Tibial artery (tissue), 4 donors: ENCODE measurements at regions of chr15 and their contacts with region 1.

Region 1: DNA sequence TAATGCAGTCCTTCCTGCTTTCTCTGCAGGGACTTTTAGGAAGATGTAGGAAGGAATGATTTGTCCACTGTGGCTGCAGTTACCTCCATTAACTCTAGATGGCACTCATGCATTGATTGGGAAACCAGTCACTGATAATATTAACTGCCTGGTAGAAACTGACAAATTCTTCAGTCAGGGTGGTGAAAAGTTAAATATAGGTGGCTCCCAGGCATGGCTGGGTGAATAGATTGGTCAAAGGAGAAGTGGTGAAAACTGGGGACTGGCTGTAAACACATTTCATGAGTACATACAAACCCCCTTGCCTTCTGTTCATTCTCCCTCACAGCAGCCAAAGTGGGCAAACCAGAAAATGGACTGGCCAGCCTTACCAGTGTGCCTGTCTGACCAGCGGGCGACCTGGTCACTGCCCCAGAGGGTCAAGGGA is 333.4 kb downstream of the THSD4 start:
- DNase-seq: peak in 1 of 2 donors; percentile 38
- H3K4me3 ChIP-seq: no peak overlapping the region
- H3K27ac ChIP-seq: no peak overlapping the region
- H3K4me1 ChIP-seq: peaks cover 0 to 15% (median 2%) of the 10 kb centered on the region in 4 donors
- H3K27me3 ChIP-seq: no peaks in the 10 kb centered on the region
- CTCF ChIP-seq: peak; percentile 93 to 97

Region 2: DNA sequence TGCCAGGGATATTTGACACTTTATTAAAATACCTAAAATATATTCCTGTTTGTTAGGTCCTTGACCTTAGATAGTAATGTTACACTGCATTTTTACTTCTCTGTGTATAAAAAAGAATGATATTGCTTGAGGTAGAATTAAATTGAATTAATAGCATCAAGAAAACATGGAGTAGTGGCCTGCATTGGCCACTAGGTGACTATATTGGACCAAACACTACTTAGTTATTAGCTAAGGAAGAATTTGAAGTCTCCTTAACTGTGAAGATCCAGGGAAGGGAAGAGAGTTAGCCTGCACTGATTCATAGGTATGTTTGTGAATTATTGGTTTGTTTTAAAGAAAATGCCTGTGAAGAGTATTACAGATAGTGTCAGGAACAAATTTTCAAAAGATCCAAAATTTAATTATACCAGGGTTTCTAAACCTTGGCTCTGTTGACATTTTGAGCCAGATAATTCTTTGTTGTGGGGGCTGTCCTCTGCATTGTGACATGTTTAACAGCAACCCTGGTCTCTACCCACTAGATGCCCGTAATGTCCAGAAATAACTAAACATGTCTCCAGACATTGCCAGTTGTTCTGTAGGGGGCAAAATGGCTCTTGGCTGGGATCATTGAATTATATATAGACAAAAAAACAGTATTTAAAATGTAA is 437.1 kb before region 1 on chr15:
- intact Hi-C with region 1: loop called (anchors 10 kb)
- DNase-seq: no peak
- H3K4me3 ChIP-seq: no peak overlapping the region
- H3K27ac ChIP-seq: no peak overlapping the region
- H3K4me1 ChIP-seq: no peaks in the 10 kb centered on the region
- H3K27me3 ChIP-seq: no peaks in the 10 kb centered on the region
- CTCF ChIP-seq: peak; percentile 80 to 81

Region 3: GRCh38 chr15:71651750-71652186 is 203.1 kb after region 1 on chr15:
- intact Hi-C with region 1: loop called (anchors 5 kb)
- DNase-seq: peak in 1 of 2 donors; percentile 25
- H3K4me3 ChIP-seq: no peak overlapping the region
- H3K27ac ChIP-seq: no peak overlapping the region
- H3K4me1 ChIP-seq: peaks cover 0 to 42% (median 8%) of the 10 kb centered on the region in 4 donors
- H3K27me3 ChIP-seq: no peaks in the 10 kb centered on the region
- CTCF ChIP-seq: peak; percentile 64 to 66

Region 4: GRCh38 chr15:71730277-71731144 is 281.8 kb after region 1 on chr15:
- intact Hi-C with region 1: loop called (anchors 5 kb)
- DNase-seq: peak in 1 of 2 donors; percentile 39
- H3K4me3 ChIP-seq: no peak overlapping the region
- H3K27ac ChIP-seq: peak overlapping the region; percentile 20 to 47
- H3K4me1 ChIP-seq: peaks cover 0 to 26% (median 20%) of the 10 kb centered on the region in 4 donors
- H3K27me3 ChIP-seq: no peaks in the 10 kb centered on the region
- CTCF ChIP-seq: peak; percentile 75 to 80

Region 5: DNA sequence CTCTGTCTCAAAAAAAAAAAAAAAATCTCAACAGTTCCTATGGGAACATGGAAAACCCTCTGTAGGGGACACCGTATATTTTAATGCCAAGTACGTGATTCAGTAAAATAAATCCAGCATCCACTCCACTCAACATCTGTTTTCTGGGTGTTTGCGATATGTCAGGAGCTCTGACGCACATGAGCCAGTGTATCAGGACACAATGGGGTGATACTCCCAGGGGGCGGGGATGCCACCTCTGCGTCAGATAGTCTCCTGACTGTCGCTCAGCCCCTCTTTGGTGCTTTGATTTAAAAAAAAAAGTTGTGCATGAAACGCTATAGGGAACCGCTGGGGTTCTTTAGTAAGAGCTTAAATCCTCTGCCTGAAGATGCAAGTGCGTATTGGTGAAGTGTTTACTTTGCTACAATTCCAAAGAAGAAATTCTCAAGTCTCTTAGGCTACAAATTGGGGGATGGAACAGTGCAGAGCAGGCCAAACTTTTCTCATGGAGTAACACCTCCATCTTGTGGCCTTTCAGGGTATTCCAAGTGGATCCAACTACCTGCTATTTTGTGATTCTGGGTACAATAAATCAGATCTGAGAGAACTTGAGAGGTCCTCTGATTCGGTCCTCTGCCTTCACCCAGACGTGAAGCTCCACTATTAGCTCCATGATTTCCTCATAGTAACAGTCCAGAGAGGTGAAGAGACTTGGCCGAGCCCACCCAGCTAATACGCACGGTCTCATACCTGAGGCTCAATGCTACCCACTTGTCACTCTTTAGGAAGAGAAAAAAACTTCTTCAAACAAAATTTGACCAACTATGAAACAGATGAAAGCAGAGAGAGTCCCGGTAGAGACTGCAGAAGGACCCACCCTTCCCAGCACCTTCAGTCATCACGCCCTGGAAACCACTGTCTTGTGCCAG is 352.4 kb after region 1 on chr15:
- intact Hi-C with region 1: loop called (anchors 10 kb)
- DNase-seq: no peak
- H3K4me3 ChIP-seq: no peak overlapping the region
- H3K27ac ChIP-seq: no peak overlapping the region
- H3K4me1 ChIP-seq: no peaks in the 10 kb centered on the region
- H3K27me3 ChIP-seq: no peaks in the 10 kb centered on the region
- CTCF ChIP-seq: peak; percentile 90 to 97